Transverse colon (tissue), 4 donors: ENCODE measurements at regions of chr2 and their contacts with region 1.

Region 1: GRCh38 chr2:216698895-216699294 is 3.5 kb upstream of the IGFBP5 start:
- DNase-seq: no peak
- H3K4me3 ChIP-seq: no peak overlapping the region
- H3K27ac ChIP-seq: peak overlapping the region; percentile 36 to 94 (median 62)
- H3K4me1 ChIP-seq: peaks cover 0 to 45% (median 9%) of the 10 kb centered on the region in 4 donors
- H3K27me3 ChIP-seq: peaks cover 63% of the 10 kb centered on the region
- CTCF ChIP-seq: peak; percentile 44 to 54 (median 48)
- EP300 ChIP-seq: no peak
- POLR2A ChIP-seq: no peak

Region 2: DNA sequence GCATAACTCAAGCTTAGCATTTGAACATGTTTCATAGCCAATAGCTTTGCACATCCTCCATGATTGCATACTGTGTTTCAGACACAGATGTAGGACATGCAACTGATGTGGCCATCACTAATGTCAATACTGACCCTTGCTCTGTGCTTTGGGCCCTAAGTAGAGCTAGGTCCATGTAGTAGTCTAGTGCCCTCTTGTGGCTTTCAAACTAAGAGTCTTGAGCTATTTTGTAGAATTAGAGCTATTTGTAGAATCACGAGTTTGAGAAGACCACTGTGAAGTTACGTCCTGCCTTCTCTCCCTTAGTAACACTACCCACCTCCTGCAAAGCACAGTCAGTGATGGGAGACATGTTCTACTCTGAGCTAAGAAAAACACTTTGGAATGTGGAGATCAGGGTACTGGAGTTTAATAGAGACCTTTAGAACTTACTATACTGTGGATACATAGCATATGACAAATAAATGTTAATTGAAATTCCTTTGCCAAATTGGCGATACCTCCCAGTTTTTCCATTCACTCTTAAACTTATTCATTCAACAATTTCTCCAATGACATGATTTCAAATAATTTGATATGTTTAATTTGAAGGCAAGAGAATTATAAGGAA is 467.5 kb after region 1 on chr2:
- in situ Hi-C with region 1: loop called in 2 of 4 experiments (anchors 10 to 25 kb)
- intact Hi-C with region 1: loop called (anchors 5 kb)
- DNase-seq: no peak
- H3K4me3 ChIP-seq: no peak overlapping the region
- H3K27ac ChIP-seq: no peak overlapping the region
- H3K4me1 ChIP-seq: peaks cover 0 to 4% (median 1%) of the 10 kb centered on the region in 4 donors
- H3K27me3 ChIP-seq: no peaks in the 10 kb centered on the region
- CTCF ChIP-seq: peak in 3 of 5 experiments; percentile 16 to 28 (median 17)
- EP300 ChIP-seq: no peak
- POLR2A ChIP-seq: no peak

Region 3: GRCh38 chr2:217331523-217332139 is 632.7 kb after region 1 on chr2:
- in situ Hi-C with region 1: no loop called
- intact Hi-C with region 1: loop called (anchors 10 kb)
- DNase-seq: no peak
- H3K4me3 ChIP-seq: no peak overlapping the region
- H3K27ac ChIP-seq: peak overlapping the region; percentile 9 to 73 (median 53)
- H3K4me1 ChIP-seq: peaks cover 0 to 11% (median 2%) of the 10 kb centered on the region in 4 donors
- H3K27me3 ChIP-seq: no peaks in the 10 kb centered on the region
- CTCF ChIP-seq: no peak
- EP300 ChIP-seq: no peak
- POLR2A ChIP-seq: no peak

Region 4: GRCh38 chr2:217415316-217415715 is 716.4 kb after region 1 on chr2:
- in situ Hi-C with region 1: loop called in 1 of 4 experiments (anchors 25 kb)
- intact Hi-C with region 1: loop called (anchors 10 kb)
- DNase-seq: no peak
- H3K4me3 ChIP-seq: no peak overlapping the region
- H3K27ac ChIP-seq: peak overlapping the region in 1 of 4 donors; percentile 75
- H3K4me1 ChIP-seq: peaks cover 0 to 22% (median 9%) of the 10 kb centered on the region in 4 donors
- H3K27me3 ChIP-seq: no peaks in the 10 kb centered on the region
- CTCF ChIP-seq: no peak
- EP300 ChIP-seq: no peak
- POLR2A ChIP-seq: no peak

Region 5: GRCh38 chr2:217713395-217714286 is 1014.7 kb after region 1 on chr2:
- in situ Hi-C with region 1: loop called in 3 of 4 experiments (anchors 25 kb)
- intact Hi-C with region 1: loop called (anchors 10 kb)
- DNase-seq: peak; percentile 75
- H3K4me3 ChIP-seq: no peak overlapping the region
- H3K27ac ChIP-seq: peak overlapping the region; percentile 34 to 76 (median 58)
- H3K4me1 ChIP-seq: peaks cover 3 to 36% (median 7%) of the 10 kb centered on the region in 4 donors
- H3K27me3 ChIP-seq: no peaks in the 10 kb centered on the region
- CTCF ChIP-seq: peak; percentile 86 to 97 (median 94)
- EP300 ChIP-seq: no peak
- POLR2A ChIP-seq: no peak